Panc1 (cell line): ENCODE measurements at regions of chr7 and their contacts with region 1.

Region 1: DNA sequence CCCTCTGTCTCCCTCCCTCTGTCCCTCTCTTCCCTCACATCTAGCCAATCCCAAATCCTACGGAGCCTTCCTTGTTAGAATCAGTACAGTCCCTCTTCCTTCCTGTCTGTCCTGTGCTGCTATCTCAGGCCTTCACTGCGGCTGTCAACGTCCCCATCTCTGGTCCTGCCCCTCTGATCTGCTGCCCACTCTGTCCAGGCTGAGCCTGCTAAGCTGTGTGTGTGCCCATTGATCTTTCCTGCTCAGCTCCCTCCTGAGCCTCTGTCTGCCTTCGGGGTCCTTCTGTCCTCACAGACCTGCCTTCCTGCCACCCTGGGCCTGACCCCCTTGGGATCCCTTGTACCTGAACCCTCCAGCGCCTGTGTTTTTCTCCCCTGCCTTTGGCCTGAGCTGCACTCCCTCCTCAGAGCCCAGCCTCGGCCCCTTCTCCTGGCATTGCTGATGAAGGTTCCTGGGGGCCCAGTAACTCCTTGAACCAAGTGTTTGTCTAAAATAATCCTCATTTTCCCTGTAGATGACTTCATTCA is 182.1 kb upstream of the SHH start:
- DNase-seq: no peak
- ATAC-seq: no peak
- H3K4me3 ChIP-seq: no peak overlapping the region
- H3K27ac ChIP-seq: no peak overlapping the region
- H3K4me1 ChIP-seq: no peaks in the 10 kb centered on the region
- H3K27me3 ChIP-seq: no peaks in the 10 kb centered on the region
- CTCF ChIP-seq: no peak

Region 2: GRCh38 chr7:155965015-155965414 is 29.3 kb before region 1 on chr7:
- CTCF ChIA-PET with region 1: interaction called, 11 read pairs
- POLR2A ChIA-PET with region 1: no interaction called
- in situ Hi-C with region 1: no loop called
- intact Hi-C with region 1: no loop called
- DNase-seq: no peak
- ATAC-seq: no peak
- H3K4me3 ChIP-seq: no peak overlapping the region
- H3K27ac ChIP-seq: no peak overlapping the region
- H3K4me1 ChIP-seq: peaks cover 13% of the 10 kb centered on the region
- H3K27me3 ChIP-seq: no peaks in the 10 kb centered on the region
- CTCF ChIP-seq: no peak

Region 3: DNA sequence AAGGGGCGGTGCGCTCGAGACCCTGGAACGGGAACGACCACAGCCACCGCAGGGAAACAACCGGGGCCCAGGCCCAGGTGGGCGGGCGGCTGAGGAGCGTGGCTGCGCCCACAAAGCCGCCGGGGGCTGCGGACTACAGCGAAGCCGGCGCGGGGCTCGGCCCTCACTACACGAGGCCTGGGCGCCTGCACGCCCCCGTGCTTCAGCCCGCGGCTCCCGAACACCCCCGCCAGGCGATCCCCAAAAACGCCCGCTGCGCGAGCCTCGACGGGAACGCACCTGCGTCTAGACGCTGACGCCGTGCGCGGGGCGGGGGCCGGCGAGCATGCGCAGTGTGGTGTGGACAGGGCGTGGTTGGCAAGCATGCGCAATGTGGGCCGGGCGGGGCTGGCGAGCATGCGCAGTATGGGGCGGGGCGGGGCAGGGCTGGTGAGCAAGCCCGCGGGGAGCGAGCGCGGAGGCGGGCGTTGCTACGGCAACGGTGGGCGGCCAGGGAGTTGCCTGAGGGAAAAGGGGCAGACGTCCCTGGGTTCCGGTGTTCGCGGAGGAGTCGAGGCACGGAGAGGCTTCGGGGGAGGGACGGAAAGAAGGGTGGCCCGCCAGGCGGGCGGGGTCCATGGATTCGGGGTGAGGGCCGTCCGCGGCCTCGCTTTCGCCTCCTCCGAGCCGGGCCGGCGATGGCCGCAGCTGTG is 646.1 kb after region 1 on chr7 and contains the start of gene RNF32:
- CTCF ChIA-PET with region 1: no interaction called
- POLR2A ChIA-PET with region 1: no interaction called
- in situ Hi-C with region 1: no loop called
- intact Hi-C with region 1: no loop called
- DNase-seq: peak; percentile 69
- ATAC-seq: peak; percentile 94
- H3K4me3 ChIP-seq: peak within 1 kb of the TSS; percentile 74 to 93
- H3K27ac ChIP-seq: peak within 1 kb of the TSS; percentile 93
- H3K4me1 ChIP-seq: peaks cover 14% of the 10 kb centered on the region
- H3K27me3 ChIP-seq: no peaks in the 10 kb centered on the region
- CTCF ChIP-seq: no peak
- total RNA-seq, gene RNF32: 3.5 TPM